Transverse colon (tissue), 4 donors: ENCODE measurements at regions of chr7 and their contacts with region 1.

Region 1: GRCh38 chr7:27442446-27442845 is 199.8 kb downstream of the EVX1 start:
- DNase-seq: no peak
- H3K4me3 ChIP-seq: no peak overlapping the region
- H3K27ac ChIP-seq: no peak overlapping the region
- H3K4me1 ChIP-seq: no peaks in the 10 kb centered on the region
- H3K27me3 ChIP-seq: no peaks in the 10 kb centered on the region
- CTCF ChIP-seq: no peak
- EP300 ChIP-seq: no peak
- POLR2A ChIP-seq: no peak

Region 2: DNA sequence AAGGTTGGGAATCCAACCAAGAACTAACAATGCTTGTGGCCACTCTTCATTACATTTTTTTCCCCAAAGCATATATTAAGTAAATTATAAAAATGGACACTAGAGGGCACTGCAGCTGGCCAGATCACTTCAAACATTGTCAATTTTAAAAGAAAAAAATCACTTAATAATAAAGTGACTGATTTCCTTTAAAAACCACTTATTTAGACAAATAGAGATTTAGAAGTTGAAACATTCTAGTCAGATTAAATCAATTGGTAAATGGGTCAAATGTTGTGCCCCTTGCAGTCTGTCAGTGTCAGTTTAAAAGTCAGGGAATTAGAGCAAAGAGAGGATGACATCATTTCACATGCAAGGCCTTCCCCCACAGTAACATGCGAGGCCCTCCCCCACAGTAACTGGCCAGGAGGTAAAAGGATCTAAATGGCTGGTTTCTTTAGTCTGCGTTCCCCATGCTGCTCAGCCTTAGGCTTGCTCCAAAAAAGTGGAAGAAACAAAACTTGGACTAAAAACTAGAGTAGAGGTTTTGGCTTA is 755.9 kb before region 1 on chr7:
- in situ Hi-C with region 1: no loop called
- intact Hi-C with region 1: no loop called
- DNase-seq: no peak
- H3K4me3 ChIP-seq: no peak overlapping the region
- H3K27ac ChIP-seq: peak overlapping the region; percentile 4 to 43 (median 30)
- H3K4me1 ChIP-seq: peaks cover 0 to 42% (median 14%) of the 10 kb centered on the region in 4 donors
- H3K27me3 ChIP-seq: no peaks in the 10 kb centered on the region
- CTCF ChIP-seq: peak; percentile 67 to 77 (median 73)
- EP300 ChIP-seq: no peak
- POLR2A ChIP-seq: no peak

Region 3: GRCh38 chr7:27389496-27389895 is 53.0 kb before region 1 on chr7:
- in situ Hi-C with region 1: no loop called
- intact Hi-C with region 1: loop called (anchors 10 kb)
- DNase-seq: no peak
- H3K4me3 ChIP-seq: no peak overlapping the region
- H3K27ac ChIP-seq: peak overlapping the region in 2 of 4 donors; percentile 2 to 41
- H3K4me1 ChIP-seq: peaks cover 0 to 7% (median 3%) of the 10 kb centered on the region in 4 donors
- H3K27me3 ChIP-seq: no peaks in the 10 kb centered on the region
- CTCF ChIP-seq: no peak
- EP300 ChIP-seq: no peak
- POLR2A ChIP-seq: no peak

Region 4: GRCh38 chr7:27651702-27652101 is 209.3 kb after region 1 on chr7:
- in situ Hi-C with region 1: no loop called
- intact Hi-C with region 1: no loop called
- DNase-seq: no peak
- H3K4me3 ChIP-seq: no peak overlapping the region
- H3K27ac ChIP-seq: no peak overlapping the region
- H3K4me1 ChIP-seq: no peaks in the 10 kb centered on the region
- H3K27me3 ChIP-seq: no peaks in the 10 kb centered on the region
- CTCF ChIP-seq: no peak
- EP300 ChIP-seq: no peak
- POLR2A ChIP-seq: no peak

Region 5: GRCh38 chr7:27735147-27735546 is 292.7 kb after region 1 on chr7:
- in situ Hi-C with region 1: no loop called
- intact Hi-C with region 1: no loop called
- DNase-seq: no peak
- H3K4me3 ChIP-seq: no peak overlapping the region
- H3K27ac ChIP-seq: peak overlapping the region; percentile 38 to 70 (median 66)
- H3K4me1 ChIP-seq: peaks cover 0 to 49% (median 28%) of the 10 kb centered on the region in 4 donors
- H3K27me3 ChIP-seq: no peaks in the 10 kb centered on the region
- CTCF ChIP-seq: no peak
- EP300 ChIP-seq: no peak
- POLR2A ChIP-seq: no peak